Activated CD4-positive, alpha-beta memory T cell treated with anti-CD3 and anti-CD28 coated beads for 36 hours (primary cell): ENCODE measurements at regions of chr6 and their contacts with region 1.

Region 1: DNA sequence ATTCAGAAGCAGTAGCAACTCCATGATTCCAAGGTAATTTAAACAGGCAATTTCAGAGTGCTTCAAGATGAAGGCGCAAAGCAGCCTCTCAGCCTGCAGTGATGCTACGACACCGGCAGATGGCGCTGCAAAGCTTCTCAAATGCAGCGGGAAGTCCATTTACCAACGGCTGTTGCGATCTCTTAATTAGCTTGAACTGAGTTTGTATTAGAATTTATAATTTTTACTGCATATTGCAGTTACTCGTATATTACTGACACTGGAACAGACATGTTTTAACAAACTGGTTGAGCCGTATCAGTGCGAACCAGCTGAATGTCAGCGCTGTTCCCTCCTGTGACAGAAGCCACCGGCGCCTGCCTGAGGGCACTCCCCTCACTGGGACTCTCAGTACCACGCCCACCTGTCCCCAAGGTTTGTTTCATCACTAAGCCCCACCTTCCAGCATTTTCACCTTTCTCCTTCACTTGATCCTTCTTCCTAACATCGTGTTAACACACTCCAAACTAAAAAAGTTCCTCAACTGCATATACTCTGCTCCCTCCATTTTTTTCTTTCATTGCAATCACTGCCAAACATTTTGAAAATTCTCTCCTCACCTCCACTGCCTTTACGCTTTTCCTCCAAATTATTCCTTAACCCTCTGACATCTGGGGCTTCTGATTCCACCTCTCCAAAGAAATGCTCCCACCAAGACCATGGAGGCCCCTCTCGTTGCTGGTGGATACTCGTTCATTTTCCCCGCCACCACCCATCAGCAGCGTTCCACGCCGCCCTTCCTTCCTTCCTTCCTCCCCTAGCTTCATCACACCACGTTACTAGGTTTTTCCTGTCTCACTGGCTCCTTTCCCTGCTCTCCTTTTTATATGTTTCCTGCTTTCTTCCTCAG is 14.5 kb downstream of the GNL1 start:
- DNase-seq: peak; percentile 88
- H3K4me3 Mint-ChIP-seq: peak overlapping the region; percentile 63
- H3K27ac Mint-ChIP-seq: peak overlapping the region; percentile 50
- H3K4me1 Mint-ChIP-seq: peaks cover 36% of the 10 kb centered on the region
- H3K27me3 Mint-ChIP-seq: no peaks in the 10 kb centered on the region

Region 2: GRCh38 chr6:30044630-30045029 is 497.1 kb before region 1 on chr6:
- CTCF ChIA-PET with region 1: no interaction called
- POLR2A ChIA-PET with region 1: no interaction called
- intact Hi-C with region 1: no loop called
- DNase-seq: no peak
- H3K4me3 Mint-ChIP-seq: no peak overlapping the region
- H3K27ac Mint-ChIP-seq: no peak overlapping the region
- H3K4me1 Mint-ChIP-seq: peaks cover 14% of the 10 kb centered on the region
- H3K27me3 Mint-ChIP-seq: no peaks in the 10 kb centered on the region

Region 3: DNA sequence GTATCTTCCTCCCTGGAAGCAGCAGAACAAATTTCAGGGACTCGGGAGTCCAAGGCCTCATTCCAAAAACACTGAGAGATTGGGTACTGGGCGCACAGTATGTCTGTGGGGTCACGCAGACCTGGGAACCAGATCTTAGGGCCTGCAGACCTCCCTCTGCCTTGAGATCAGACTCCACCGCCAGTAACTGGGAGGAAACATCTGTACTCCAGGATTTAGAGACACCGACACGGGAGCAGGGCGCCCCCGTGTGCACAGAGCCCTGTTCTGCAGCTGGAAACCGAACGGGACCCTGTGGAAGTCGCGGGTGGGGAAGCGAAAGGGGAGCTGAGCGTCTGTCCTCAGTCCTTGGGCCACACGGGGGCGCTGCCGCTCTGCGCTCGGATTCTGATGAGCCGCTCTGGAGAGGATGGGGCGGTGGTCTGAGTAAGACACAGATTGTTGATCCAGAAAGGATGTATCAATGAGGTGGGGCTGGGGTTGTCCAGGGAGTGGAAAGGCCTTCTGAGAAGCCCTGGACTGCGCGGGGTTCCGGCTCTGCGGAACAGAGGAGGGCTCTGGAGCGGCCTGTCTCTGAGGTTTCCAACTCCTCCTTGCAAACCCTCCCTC is 88.1 kb before region 1 on chr6:
- CTCF ChIA-PET with region 1: interaction called, 58 read pairs
- POLR2A ChIA-PET with region 1: no interaction called
- intact Hi-C with region 1: no loop called
- DNase-seq: peak; percentile 88
- H3K4me3 Mint-ChIP-seq: peak overlapping the region; percentile 33
- H3K27ac Mint-ChIP-seq: no peak overlapping the region
- H3K4me1 Mint-ChIP-seq: peaks cover 32% of the 10 kb centered on the region
- H3K27me3 Mint-ChIP-seq: peaks cover 82% of the 10 kb centered on the region

Region 4: DNA sequence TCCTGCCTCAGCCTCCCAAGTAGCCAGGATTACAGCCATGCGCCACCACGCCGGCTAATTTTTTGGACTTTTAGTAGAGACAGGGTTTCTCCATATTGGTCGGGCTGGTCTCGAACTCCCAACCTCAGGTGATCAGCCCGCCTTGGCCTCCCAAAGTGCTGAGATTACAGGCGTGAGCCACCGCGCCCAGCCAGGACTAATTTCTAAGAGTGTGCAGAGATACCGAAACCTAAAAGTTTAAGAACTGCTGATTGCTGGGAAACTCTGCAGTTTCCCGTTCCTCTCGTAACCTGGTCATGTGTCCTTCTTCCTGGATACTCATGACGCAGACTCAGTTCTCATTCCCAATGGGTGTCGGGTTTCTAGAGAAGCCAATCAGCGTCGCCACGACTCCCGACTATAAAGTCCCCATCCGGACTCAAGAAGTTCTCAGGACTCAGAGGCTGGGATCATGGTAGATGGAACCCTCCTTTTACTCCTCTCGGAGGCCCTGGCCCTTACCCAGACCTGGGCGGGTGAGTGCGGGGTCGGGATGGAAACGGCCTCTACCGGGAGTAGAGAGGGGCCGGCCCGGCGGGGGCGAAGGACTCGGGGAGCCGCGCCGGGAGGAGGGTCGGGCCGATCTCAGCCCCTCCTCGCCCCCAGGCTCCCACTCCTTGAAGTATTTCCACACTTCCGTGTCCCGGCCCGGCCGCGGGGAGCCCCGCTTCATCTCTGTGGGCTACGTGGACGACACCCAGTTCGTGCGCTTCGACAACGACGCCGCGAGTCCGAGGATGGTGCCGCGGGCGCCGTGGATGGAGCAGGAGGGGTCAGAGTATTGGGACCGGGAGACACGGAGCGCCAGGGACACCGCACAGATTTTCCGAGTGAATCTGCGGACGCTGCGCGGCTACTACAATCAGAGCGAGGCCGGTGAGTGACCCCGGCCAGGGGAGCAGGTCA is 52.4 kb before region 1 on chr6 and contains the start of gene HLA-E:
- CTCF ChIA-PET with region 1: interaction called, 446 read pairs
- POLR2A ChIA-PET with region 1: interaction called, 18 read pairs
- intact Hi-C with region 1: no loop called
- DNase-seq: peak; percentile 93
- H3K4me3 Mint-ChIP-seq: peak within 1 kb of the TSS; percentile 99
- H3K27ac Mint-ChIP-seq: peak within 1 kb of the TSS; percentile 99
- H3K4me1 Mint-ChIP-seq: peaks cover 41% of the 10 kb centered on the region
- H3K27me3 Mint-ChIP-seq: peaks cover 2% of the 10 kb centered on the region
- total RNA-seq, gene HLA-E: 481 to 485 TPM

Region 5: GRCh38 chr6:30515932-30516753 is 25.6 kb before region 1 on chr6:
- CTCF ChIA-PET with region 1: interaction called, 29 read pairs
- POLR2A ChIA-PET with region 1: interaction called, 6 read pairs
- intact Hi-C with region 1: no loop called
- DNase-seq: peak; percentile 97
- H3K4me3 Mint-ChIP-seq: peak overlapping the region; percentile 78
- H3K27ac Mint-ChIP-seq: peak overlapping the region; percentile 98
- H3K4me1 Mint-ChIP-seq: peaks cover 59% of the 10 kb centered on the region
- H3K27me3 Mint-ChIP-seq: no peaks in the 10 kb centered on the region

Region 6: DNA sequence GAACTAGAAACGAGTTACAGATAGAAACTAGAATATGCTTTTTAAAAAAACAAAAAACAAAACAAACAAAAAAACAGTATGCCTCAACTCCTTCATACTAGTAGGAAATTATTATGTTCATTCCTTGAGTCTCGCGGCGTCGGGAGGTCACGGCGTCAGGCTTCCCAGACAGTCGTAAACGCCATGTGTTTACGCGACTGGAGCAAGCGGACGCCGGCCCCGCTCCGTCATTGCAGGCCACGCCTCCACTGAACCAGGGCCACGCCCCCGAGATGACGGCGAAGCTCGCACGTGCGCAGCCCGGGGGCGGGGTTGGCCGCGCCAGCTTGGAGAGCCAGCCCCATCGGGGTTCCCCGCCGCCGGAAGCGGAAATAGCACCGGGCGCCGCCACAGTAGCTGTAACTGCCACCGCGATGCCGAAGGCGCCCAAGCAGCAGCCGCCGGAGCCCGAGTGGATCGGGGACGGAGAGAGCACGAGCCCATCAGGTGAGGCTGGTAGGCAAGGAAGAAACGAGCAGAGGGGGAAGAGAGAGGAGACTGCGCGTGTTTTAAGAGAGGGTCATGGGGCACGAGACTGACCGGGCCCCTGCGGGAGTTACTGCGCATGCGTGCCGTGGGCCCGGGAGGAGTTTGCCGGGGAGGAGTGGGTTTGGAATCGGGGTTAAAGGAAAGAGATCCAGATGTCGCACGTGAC is 29.5 kb after region 1 on chr6 and contains the start of gene ABCF1:
- CTCF ChIA-PET with region 1: interaction called, 12 read pairs
- POLR2A ChIA-PET with region 1: no interaction called
- intact Hi-C with region 1: no loop called
- DNase-seq: peak; percentile 99
- H3K4me3 Mint-ChIP-seq: peak within 1 kb of the TSS; percentile 94
- H3K27ac Mint-ChIP-seq: peak within 1 kb of the TSS; percentile 94
- H3K4me1 Mint-ChIP-seq: peaks cover 60% of the 10 kb centered on the region
- H3K27me3 Mint-ChIP-seq: no peaks in the 10 kb centered on the region
- total RNA-seq, gene ABCF1: 87.0 to 87.1 TPM

Region 7: GRCh38 chr6:30600451-30600961 is 58.7 kb after region 1 on chr6:
- CTCF ChIA-PET with region 1: interaction called, 78 read pairs
- POLR2A ChIA-PET with region 1: interaction called, 10 read pairs
- intact Hi-C with region 1: loop called (anchors 2 kb)
- DNase-seq: no peak
- H3K4me3 Mint-ChIP-seq: no peak overlapping the region
- H3K27ac Mint-ChIP-seq: no peak overlapping the region
- H3K4me1 Mint-ChIP-seq: peaks cover 14% of the 10 kb centered on the region
- H3K27me3 Mint-ChIP-seq: no peaks in the 10 kb centered on the region

Region 8: DNA sequence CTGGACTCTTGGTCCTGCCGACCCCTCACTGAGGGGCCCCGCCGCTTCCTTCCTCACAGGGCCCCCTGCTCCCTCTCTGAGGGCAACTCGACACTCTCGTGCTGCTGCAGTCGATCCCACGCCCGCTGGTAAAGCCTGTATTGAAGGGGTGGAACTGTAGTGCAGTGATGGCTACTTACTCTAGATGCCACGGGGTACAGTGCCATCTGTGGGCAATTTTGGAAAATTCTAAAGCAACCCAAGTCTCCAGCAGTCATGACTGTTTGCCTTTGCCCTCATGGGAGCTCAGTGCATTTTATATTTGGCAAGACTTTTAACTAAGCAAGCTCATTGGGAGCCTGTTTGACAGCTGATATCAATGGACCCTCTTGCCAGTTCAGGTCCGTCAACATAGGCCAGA is 98.7 kb after region 1 on chr6:
- CTCF ChIA-PET with region 1: no interaction called
- POLR2A ChIA-PET with region 1: no interaction called
- intact Hi-C with region 1: no loop called
- DNase-seq: no peak
- H3K4me3 Mint-ChIP-seq: no peak overlapping the region
- H3K27ac Mint-ChIP-seq: no peak overlapping the region
- H3K4me1 Mint-ChIP-seq: peaks cover 5% of the 10 kb centered on the region
- H3K27me3 Mint-ChIP-seq: no peaks in the 10 kb centered on the region

Region 9: GRCh38 chr6:31087494-31088089 is 545.8 kb after region 1 on chr6:
- CTCF ChIA-PET with region 1: interaction called, 12 read pairs
- POLR2A ChIA-PET with region 1: no interaction called
- intact Hi-C with region 1: loop called (anchors 10 kb)
- DNase-seq: peak; percentile 92
- H3K4me3 Mint-ChIP-seq: peak overlapping the region; percentile 12
- H3K27ac Mint-ChIP-seq: peak overlapping the region; percentile 45
- H3K4me1 Mint-ChIP-seq: peaks cover 11% of the 10 kb centered on the region
- H3K27me3 Mint-ChIP-seq: no peaks in the 10 kb centered on the region